Dendritic cell treated with granulocyte-macrophage colony-stimulating factor and Interleukin-4, amounts not matched to agents 40 ng/mL and 50 ng/mL, for 4 days (primary cell): ENCODE measurements at regions of chr1 and their contacts with region 1.

Region 1: DNA sequence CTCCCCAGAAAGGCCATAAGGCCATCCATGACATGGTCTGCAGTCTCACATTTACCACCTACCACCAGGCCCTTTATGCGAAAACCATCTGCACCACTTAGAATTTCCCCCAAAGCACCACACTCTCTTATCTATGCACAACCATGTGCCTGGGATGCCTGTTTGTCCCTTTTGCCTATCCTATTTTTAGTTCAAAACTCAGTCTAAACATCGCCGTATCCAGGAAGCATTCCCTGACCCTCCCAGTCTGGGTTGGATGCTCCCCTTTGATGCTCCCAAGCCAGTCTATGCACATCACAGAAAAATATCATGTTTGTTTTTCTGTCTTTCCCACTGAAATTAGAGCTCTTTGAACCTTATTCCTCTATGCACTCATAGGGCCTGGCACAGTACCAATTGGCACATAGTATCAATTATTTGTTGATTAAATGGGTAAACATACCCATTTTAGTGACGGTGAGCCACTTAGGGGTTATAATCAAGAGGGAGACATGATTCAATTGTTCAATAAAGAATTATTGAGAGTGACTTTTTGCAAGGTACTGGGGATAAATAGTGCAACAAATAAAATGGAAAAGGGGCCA is 6.7 kb downstream of the MPL start:
- H3K4me3 Mint-ChIP-seq: no peak overlapping the region
- H3K27ac Mint-ChIP-seq: no peak overlapping the region
- H3K4me1 Mint-ChIP-seq: peaks cover 6% of the 10 kb centered on the region
- H3K27me3 Mint-ChIP-seq: no peaks in the 10 kb centered on the region

Region 2: DNA sequence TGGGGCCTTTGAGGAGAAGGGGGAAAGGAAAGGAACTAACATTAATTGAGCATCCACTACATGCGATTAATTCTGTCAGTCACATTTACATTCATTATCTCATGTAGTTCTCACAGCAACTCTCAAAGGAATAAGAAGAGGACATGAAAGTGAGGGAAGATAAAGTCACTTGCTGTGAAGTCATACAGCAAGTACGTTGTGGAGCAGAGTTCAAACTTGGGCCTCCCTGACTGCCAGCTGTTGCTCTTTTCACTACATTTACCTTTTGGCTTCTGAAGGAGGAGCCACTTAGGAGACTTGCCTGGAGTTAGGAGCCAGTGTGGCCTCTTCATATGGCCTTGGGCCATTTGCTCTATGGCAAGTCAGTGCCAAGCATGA is 491.8 kb before region 1 on chr1:
- intact Hi-C with region 1: loop called (anchors 5 kb)
- H3K4me3 Mint-ChIP-seq: no peak overlapping the region
- H3K27ac Mint-ChIP-seq: no peak overlapping the region
- H3K4me1 Mint-ChIP-seq: peaks cover 24% of the 10 kb centered on the region
- H3K27me3 Mint-ChIP-seq: peaks cover 2% of the 10 kb centered on the region

Region 3: DNA sequence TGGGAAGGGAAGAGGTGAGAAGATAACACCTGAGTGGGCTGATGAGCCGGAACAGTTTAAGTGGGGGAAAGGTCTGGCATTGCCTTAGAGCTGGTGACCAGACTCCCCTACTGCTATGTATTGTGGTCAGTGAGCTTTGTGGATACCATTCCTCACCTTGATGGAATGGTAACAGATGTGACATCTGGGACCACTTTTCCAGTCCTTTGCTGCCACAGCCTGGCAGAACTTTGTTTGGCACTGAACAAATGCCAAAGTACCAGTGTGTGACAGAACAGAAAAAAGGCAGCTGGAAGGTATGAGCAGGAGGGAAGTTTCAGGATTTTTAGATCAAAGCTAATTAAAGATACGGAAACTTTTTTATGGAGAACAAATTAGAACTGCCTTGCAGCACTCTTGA is 39.1 kb after region 1 on chr1:
- intact Hi-C with region 1: no loop called
- H3K4me3 Mint-ChIP-seq: no peak overlapping the region
- H3K27ac Mint-ChIP-seq: peak overlapping the region; percentile 87
- H3K4me1 Mint-ChIP-seq: peaks cover 80% of the 10 kb centered on the region
- H3K27me3 Mint-ChIP-seq: no peaks in the 10 kb centered on the region